Activated CD8-positive, alpha-beta T cell treated with anti-CD3 and anti-CD28 coated beads for 36 hours (primary cell): ENCODE measurements at regions of chr6 and their contacts with region 1.

Region 1: GRCh38 chr6:34425498-34426410 is at the start of gene RPS10:
- DNase-seq: peak; percentile 92
- ATAC-seq: peak; percentile 98
- H3K4me3 Mint-ChIP-seq: peak within 1 kb of the TSS; percentile 98
- H3K27ac Mint-ChIP-seq: peak within 1 kb of the TSS; percentile 100
- H3K4me1 Mint-ChIP-seq: peaks cover 33% of the 10 kb centered on the region
- H3K27me3 Mint-ChIP-seq: peaks cover 2% of the 10 kb centered on the region
- CTCF ChIP-seq: no peak
- total RNA-seq, gene RPS10: 2,208 to 2,269 TPM

Region 2: DNA sequence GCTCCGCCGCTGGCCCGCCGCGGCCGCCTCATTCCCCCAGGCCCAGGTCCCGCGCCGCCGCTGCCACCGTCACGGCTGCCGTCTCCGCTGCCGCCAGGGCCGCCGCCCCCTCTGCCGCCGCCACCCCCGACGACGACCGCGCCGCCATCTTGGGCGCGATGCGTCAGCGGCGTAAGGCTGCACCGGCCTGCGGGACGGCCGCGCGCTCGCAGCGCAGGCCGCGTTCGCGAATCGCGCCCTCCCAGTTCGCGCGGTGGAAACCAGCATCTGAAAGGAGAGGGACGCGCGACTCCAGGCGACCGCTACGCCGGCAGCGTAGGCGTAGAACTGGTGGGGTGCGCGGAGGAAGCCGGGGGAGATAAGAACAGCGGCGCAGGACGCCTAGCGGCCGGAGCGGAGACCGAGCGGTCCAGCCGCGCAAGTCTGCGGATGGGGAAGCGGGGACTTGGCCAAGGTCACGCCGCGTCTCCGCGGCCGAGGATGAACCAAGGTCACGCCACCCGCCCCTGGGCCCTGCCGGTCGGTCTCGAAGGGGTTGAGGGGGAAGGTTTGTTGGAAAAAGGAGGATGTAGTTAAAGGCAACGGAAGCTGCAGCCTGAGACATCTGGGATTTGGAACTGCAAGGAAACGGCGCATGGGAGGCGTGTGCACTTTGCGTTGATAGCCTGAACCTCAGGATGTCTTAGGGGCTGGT is 33.1 kb before region 1 on chr6 and contains the start of gene NUDT3:
- CTCF ChIA-PET with region 1: no interaction called
- POLR2A ChIA-PET with region 1: interaction called, 16 read pairs
- intact Hi-C with region 1: no loop called
- DNase-seq: peak; percentile 96
- ATAC-seq: peak; percentile 94
- H3K4me3 Mint-ChIP-seq: no peak within 1 kb of the TSS
- H3K27ac Mint-ChIP-seq: peak within 1 kb of the TSS; percentile 93
- H3K4me1 Mint-ChIP-seq: peaks cover 20% of the 10 kb centered on the region
- H3K27me3 Mint-ChIP-seq: no peaks in the 10 kb centered on the region
- CTCF ChIP-seq: peak; percentile 76
- total RNA-seq, gene NUDT3: 15.0 to 15.2 TPM